Dendritic cell treated with granulocyte-macrophage colony-stimulating factor and Interleukin-4, amounts not matched to agents 40 ng/mL and 50 ng/mL, for 4 days (primary cell): ENCODE measurements at regions of chr4 and their contacts with region 1.

Region 1: GRCh38 chr4:37732526-37733186 is 46.5 kb upstream of the RELL1 start:
- H3K4me3 Mint-ChIP-seq: no peak overlapping the region
- H3K27ac Mint-ChIP-seq: no peak overlapping the region
- H3K4me1 Mint-ChIP-seq: peaks cover 47% of the 10 kb centered on the region
- H3K27me3 Mint-ChIP-seq: no peaks in the 10 kb centered on the region

Region 2: DNA sequence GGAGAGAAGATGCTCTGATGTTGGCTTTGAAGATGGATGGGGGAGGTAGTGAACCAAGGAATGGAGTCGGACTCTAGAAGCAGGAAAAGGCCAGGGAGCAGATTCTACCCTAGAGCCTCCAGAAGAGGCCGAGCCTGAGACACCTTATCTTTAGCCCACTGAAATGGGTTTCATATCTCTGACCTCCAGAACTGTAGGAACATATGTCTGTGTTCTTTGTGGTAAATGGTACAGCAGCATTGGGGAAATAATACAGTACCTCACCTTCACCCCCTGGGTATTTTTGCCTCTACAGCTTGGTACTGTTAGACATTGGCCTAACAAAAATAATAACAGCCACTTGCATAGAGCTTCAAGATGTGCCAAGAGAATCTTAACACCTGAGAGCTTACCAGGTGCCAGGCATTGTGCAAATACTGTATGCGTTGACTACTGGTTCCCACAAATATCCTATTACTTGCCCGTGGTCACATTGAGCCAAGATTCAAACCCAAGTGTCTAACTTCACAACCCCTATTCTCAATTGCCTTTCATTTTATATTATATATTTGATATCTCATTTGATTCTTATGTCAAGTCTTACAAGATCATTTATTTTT is 36.8 kb after region 1 on chr4:
- intact Hi-C with region 1: no loop called
- H3K4me3 Mint-ChIP-seq: no peak overlapping the region
- H3K27ac Mint-ChIP-seq: no peak overlapping the region
- H3K4me1 Mint-ChIP-seq: peaks cover 32% of the 10 kb centered on the region
- H3K27me3 Mint-ChIP-seq: no peaks in the 10 kb centered on the region

Region 3: GRCh38 chr4:37780444-37781150 is 47.9 kb after region 1 on chr4:
- intact Hi-C with region 1: loop called (anchors 5 kb)
- H3K4me3 Mint-ChIP-seq: no peak overlapping the region
- H3K27ac Mint-ChIP-seq: no peak overlapping the region
- H3K4me1 Mint-ChIP-seq: peaks cover 12% of the 10 kb centered on the region
- H3K27me3 Mint-ChIP-seq: no peaks in the 10 kb centered on the region